ENCODE measurements at regions of chr4 and their contacts with region 1.

Region 1: DNA sequence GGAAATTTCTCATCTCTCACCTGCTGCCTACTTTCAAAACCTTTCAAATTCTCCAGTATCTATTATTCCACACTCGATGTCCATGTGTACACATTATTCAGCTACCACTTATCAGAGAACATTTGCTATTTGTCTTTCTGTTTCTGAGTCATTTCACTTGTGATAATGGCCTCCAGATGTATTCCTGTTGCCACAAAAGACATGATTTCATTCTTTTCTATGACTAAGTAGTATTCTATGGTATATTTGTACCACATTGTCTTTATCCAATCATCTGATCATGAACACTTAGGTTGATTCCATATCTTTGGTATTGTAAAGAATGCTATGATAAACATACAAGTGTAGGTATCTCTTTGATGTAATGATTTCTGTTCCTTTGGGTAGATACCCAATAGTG is 310.1 kb upstream of the SPOCK3 start:
- DNase-seq: no peak
- ATAC-seq: no peak
- H3K4me3 ChIP-seq: no peak overlapping the region
- H3K4me3 Mint-ChIP-seq: no peak overlapping the region
- H3K27ac ChIP-seq: no peak overlapping the region
- H3K27ac Mint-ChIP-seq: no peak overlapping the region
- H3K4me1 ChIP-seq: no peaks in the 10 kb centered on the region
- H3K4me1 Mint-ChIP-seq: no peaks in the 10 kb centered on the region
- H3K27me3 ChIP-seq: no peaks in the 10 kb centered on the region
- H3K27me3 Mint-ChIP-seq: no peaks in the 10 kb centered on the region
- CTCF ChIP-seq: no peak

Region 2: DNA sequence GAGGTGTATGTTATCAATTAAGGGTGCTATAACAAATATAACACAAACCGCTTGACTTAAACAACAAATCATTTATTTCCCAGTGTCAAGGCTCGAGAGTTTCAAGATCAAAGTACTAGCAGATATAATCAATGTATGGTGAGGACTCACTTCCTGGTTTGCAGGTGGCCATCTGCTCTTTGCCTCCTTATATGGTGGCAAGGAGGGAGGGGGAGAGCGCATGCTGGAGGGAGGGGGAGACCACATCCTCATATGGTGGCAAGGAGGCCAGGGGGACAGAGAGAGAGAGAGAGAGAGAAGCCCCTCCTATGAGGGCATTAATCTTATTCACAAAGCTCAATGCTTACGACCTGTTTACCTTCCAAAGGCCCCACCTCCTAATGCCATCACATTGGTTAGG is 62.2 kb after region 1 on chr4:
- CTCF ChIA-PET with region 1: no interaction called
- POLR2A ChIA-PET with region 1: no interaction called
- intact Hi-C with region 1: loop called in 1 of 2 experiments (anchors 2 kb)
- DNase-seq: no peak
- ATAC-seq: no peak
- H3K4me3 ChIP-seq: no peak overlapping the region
- H3K4me3 Mint-ChIP-seq: no peak overlapping the region
- H3K27ac ChIP-seq: no peak overlapping the region
- H3K27ac Mint-ChIP-seq: no peak overlapping the region
- H3K4me1 ChIP-seq: no peaks in the 10 kb centered on the region
- H3K4me1 Mint-ChIP-seq: no peaks in the 10 kb centered on the region
- H3K27me3 ChIP-seq: no peaks in the 10 kb centered on the region
- H3K27me3 Mint-ChIP-seq: no peaks in the 10 kb centered on the region
- CTCF ChIP-seq: no peak

Region 3: DNA sequence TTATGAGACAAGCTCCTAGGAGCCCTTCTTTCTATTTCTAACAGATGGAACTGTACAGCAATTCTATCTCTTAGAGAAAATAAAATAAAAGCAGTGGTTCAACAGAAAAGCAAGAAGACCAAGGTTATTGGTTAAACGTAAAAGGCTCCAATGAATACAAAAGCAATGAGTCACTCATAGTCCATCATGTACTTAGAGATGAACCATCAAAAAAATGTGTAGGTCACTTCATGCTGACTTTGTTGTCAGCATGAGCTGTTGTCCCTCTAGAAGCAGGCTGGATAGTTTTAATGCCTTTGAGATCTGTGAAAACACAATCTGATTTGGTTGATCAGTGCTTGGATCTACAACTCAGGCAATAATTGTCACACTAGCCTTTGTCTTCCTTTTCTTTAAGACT is 169.4 kb after region 1 on chr4:
- CTCF ChIA-PET with region 1: no interaction called
- POLR2A ChIA-PET with region 1: no interaction called
- intact Hi-C with region 1: no loop called
- DNase-seq: no peak
- ATAC-seq: no peak
- H3K4me3 ChIP-seq: no peak overlapping the region
- H3K4me3 Mint-ChIP-seq: no peak overlapping the region
- H3K27ac ChIP-seq: no peak overlapping the region
- H3K27ac Mint-ChIP-seq: no peak overlapping the region
- H3K4me1 ChIP-seq: no peaks in the 10 kb centered on the region
- H3K4me1 Mint-ChIP-seq: no peaks in the 10 kb centered on the region
- H3K27me3 ChIP-seq: no peaks in the 10 kb centered on the region
- H3K27me3 Mint-ChIP-seq: no peaks in the 10 kb centered on the region
- CTCF ChIP-seq: no peak

Measured in CD4-positive, alpha-beta T cell (primary cell).